CD8-positive, alpha-beta T cell (primary cell): ENCODE measurements at regions of chr19 and their contacts with region 1.

Region 1: GRCh38 chr19:18588611-18589379 is at the start of gene REX1BD:
- DNase-seq: peak; percentile 71 to 94 (median 89)
- ATAC-seq: peak; percentile 81
- H3K4me3 ChIP-seq: peak within 1 kb of the TSS; percentile 62 to 83
- H3K4me3 Mint-ChIP-seq: peak within 1 kb of the TSS; percentile 93
- H3K27ac ChIP-seq: peak within 1 kb of the TSS; percentile 83 to 86
- H3K27ac Mint-ChIP-seq: peak within 1 kb of the TSS; percentile 95
- H3K4me1 ChIP-seq: peaks cover 31% of the 10 kb centered on the region
- H3K4me1 Mint-ChIP-seq: peaks cover 34% of the 10 kb centered on the region
- H3K27me3 ChIP-seq: no peaks in the 10 kb centered on the region
- H3K27me3 Mint-ChIP-seq: no peaks in the 10 kb centered on the region
- CTCF ChIP-seq: peak; percentile 77
- total RNA-seq, gene REX1BD: 85.6 to 91.1 TPM

Region 2: GRCh38 chr19:18192673-18193387 is 396.0 kb before region 1 on chr19 and contains the start of gene MPV17L2:
- CTCF ChIA-PET with region 1: no interaction called
- POLR2A ChIA-PET with region 1: no interaction called
- intact Hi-C with region 1: loop called in 1 of 2 experiments (anchors 2 kb)
- DNase-seq: peak; percentile 95 to 100 (median 97)
- ATAC-seq: peak; percentile 84
- H3K4me3 ChIP-seq: peak within 1 kb of the TSS; percentile 73
- H3K4me3 Mint-ChIP-seq: peak within 1 kb of the TSS; percentile 87
- H3K27ac ChIP-seq: peak within 1 kb of the TSS; percentile 64 to 82
- H3K27ac Mint-ChIP-seq: peak within 1 kb of the TSS; percentile 90
- H3K4me1 ChIP-seq: peaks cover 18% of the 10 kb centered on the region
- H3K4me1 Mint-ChIP-seq: peaks cover 22% of the 10 kb centered on the region
- H3K27me3 ChIP-seq: no peaks in the 10 kb centered on the region
- H3K27me3 Mint-ChIP-seq: no peaks in the 10 kb centered on the region
- CTCF ChIP-seq: no peak
- total RNA-seq, gene MPV17L2: 4.0 to 5.2 TPM

Region 3: DNA sequence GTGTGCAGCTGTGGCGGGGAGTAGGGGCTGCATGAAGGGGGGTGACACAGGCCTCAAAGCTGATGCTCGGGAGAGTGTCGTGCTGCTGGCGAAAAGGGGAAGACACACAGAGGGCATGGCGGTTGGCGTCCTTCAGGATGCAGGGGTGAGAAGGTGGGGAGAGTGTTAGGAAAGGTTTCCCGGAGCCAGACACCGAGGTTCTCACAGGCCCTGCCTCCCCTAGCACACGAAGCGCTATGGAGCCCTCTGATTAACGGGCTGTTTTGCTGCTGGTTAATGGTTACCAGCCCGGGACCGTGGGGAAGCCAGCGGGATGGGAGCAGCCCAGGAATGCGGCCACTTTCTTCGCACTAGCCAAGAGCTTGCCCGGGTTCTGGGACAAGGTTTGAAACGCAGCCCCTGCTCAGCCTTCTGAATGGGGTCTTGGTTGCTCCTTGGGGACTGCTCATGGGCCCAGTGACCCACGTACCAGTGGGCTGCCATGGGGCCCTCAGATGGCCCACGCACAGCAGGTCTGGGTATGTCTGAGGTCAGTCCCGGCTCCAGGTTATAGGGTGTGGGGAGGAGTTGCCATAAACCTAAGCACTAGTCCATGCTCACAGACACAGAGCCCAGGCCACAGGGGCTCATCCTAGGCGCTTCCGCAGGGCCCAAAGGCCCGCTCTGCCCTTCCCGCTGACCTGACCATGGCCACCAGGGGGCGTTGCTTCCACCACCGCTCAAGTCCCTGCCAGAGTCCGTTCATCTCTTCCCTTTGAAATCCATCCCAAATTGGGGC is 119.5 kb before region 1 on chr19:
- CTCF ChIA-PET with region 1: interaction called, 6 read pairs
- POLR2A ChIA-PET with region 1: interaction called, 4 read pairs
- intact Hi-C with region 1: loop called in 1 of 2 experiments (anchors 5 kb)
- DNase-seq: peak; percentile 24 to 77 (median 62)
- ATAC-seq: peak; percentile 55
- H3K4me3 ChIP-seq: no peak overlapping the region
- H3K4me3 Mint-ChIP-seq: no peak overlapping the region
- H3K27ac ChIP-seq: no peak overlapping the region
- H3K27ac Mint-ChIP-seq: no peak overlapping the region
- H3K4me1 ChIP-seq: peaks cover 13% of the 10 kb centered on the region
- H3K4me1 Mint-ChIP-seq: peaks cover 21% of the 10 kb centered on the region
- H3K27me3 ChIP-seq: no peaks in the 10 kb centered on the region
- H3K27me3 Mint-ChIP-seq: no peaks in the 10 kb centered on the region
- CTCF ChIP-seq: peak; percentile 56

Region 4: DNA sequence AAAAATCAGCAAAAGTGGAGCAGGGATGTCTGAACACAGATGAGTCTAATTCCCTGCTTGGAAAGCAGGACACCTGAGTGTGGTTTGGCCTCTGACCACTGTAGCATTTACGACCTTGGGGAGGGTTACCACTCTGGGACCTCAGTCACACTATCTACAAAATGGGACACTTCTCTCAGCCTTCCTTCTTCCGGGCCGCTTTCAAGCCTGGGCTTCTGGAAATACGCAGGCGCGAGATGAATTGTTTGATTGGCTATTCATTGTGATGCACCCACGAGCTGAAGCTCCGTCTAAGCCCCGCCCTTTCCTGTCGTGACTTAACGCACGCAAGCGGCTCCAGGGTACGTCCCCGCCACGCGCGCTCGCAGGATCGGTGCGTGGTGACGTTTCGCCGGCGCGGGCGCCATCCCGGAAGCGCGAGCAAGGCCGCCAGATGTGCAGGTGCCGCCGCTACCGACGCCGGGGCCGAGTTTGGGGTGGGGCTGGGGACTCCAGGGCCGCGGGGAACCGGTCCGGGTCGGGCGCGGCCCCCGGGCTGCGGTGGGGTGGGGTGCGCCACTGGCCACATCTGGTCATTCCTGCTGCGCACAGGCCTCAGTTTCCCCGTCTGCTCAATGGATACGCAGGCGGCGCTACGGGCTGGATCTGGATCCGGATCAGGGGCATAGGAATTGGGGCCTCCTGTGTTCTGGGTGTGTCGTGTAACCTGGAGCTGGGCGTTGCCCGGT is 31.2 kb before region 1 on chr19 and contains the start of gene KXD1:
- CTCF ChIA-PET with region 1: no interaction called
- POLR2A ChIA-PET with region 1: interaction called, 15 read pairs
- intact Hi-C with region 1: loop called (anchors 1 kb)
- DNase-seq: peak; percentile 92 to 100 (median 97)
- ATAC-seq: peak; percentile 99
- H3K4me3 ChIP-seq: peak within 1 kb of the TSS; percentile 98 to 99
- H3K4me3 Mint-ChIP-seq: peak within 1 kb of the TSS; percentile 91
- H3K27ac ChIP-seq: peak within 1 kb of the TSS; percentile 96 to 99
- H3K27ac Mint-ChIP-seq: peak within 1 kb of the TSS; percentile 90
- H3K4me1 ChIP-seq: peaks cover 20% of the 10 kb centered on the region
- H3K4me1 Mint-ChIP-seq: peaks cover 20% of the 10 kb centered on the region
- H3K27me3 ChIP-seq: no peaks in the 10 kb centered on the region
- H3K27me3 Mint-ChIP-seq: no peaks in the 10 kb centered on the region
- CTCF ChIP-seq: no peak
- total RNA-seq, gene KXD1: 64.1 to 76.1 TPM

Region 5: DNA sequence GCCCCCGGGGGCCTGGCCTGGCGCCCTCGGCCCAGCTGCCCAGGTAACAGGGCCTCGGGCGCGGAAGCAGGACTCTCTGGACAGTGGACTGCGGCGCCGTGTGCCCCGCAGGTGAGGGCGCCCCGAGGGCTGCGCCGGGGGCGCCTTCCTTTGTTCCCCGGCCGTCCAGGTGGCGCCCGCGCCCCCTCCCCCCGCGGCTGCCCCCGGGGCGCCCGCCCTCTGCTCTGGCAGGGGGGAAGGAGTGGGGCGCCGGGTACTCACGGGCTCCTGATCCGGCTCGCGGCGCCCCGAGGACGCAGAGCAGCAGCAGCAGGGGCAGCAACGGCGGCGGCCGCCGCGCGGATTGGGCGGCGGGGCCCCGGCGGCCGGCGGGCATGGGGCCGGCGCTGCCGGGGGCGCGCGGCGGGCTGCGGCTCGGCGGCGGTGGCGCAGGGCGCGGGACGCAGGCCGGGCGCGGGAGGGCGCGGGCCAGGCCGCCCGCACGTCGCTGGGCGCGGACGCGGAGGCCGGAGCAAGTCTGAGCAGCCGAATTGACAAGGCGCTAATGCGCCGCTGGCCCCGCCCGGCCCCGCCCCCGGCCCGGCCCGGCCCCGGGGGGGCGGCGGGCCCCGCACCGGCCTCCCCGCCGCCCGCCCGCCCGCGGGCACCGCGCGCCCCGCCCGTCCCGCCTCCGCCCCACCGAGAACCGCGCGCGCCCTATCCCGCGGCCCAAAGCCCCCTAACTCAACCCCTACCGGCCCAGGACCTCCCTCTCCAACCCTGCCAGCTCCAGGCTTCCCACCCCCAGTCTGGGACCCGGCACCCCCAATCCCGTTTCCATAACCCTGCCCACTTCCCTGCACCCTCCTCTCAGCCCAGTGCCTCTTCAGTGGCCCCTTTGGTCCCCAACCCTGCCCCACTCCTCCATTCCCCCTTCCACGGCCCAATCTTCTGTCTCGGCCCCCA is 17.8 kb after region 1 on chr19 and contains the start of gene CRLF1:
- CTCF ChIA-PET with region 1: no interaction called
- POLR2A ChIA-PET with region 1: no interaction called
- intact Hi-C with region 1: no loop called
- DNase-seq: no peak
- ATAC-seq: no peak
- H3K4me3 ChIP-seq: no peak within 1 kb of the TSS
- H3K4me3 Mint-ChIP-seq: peak within 1 kb of the TSS; percentile 15
- H3K27ac ChIP-seq: no peak within 1 kb of the TSS
- H3K27ac Mint-ChIP-seq: no peak within 1 kb of the TSS
- H3K4me1 ChIP-seq: peaks cover 7% of the 10 kb centered on the region
- H3K4me1 Mint-ChIP-seq: peaks cover 20% of the 10 kb centered on the region
- H3K27me3 ChIP-seq: peaks cover 50 to 61% of the 10 kb centered on the region in 2 experiments
- H3K27me3 Mint-ChIP-seq: peaks cover 66% of the 10 kb centered on the region
- CTCF ChIP-seq: no peak
- total RNA-seq, gene CRLF1: not detected

Region 6: GRCh38 chr19:18683213-18683939 is 94.6 kb after region 1 on chr19 and contains the start of gene CRTC1:
- CTCF ChIA-PET with region 1: interaction called, 3 read pairs
- POLR2A ChIA-PET with region 1: no interaction called
- intact Hi-C with region 1: loop called in 1 of 2 experiments (anchors 2 kb)
- DNase-seq: peak; percentile 90 to 97 (median 95)
- ATAC-seq: peak; percentile 90
- H3K4me3 ChIP-seq: peak within 1 kb of the TSS; percentile 63 to 91
- H3K4me3 Mint-ChIP-seq: peak within 1 kb of the TSS; percentile 87
- H3K27ac ChIP-seq: peak within 1 kb of the TSS; percentile 65 to 67
- H3K27ac Mint-ChIP-seq: peak within 1 kb of the TSS; percentile 82
- H3K4me1 ChIP-seq: peaks cover 20% of the 10 kb centered on the region
- H3K4me1 Mint-ChIP-seq: peaks cover 33% of the 10 kb centered on the region
- H3K27me3 ChIP-seq: no peaks in the 10 kb centered on the region
- H3K27me3 Mint-ChIP-seq: no peaks in the 10 kb centered on the region
- CTCF ChIP-seq: no peak
- total RNA-seq, gene CRTC1: 7.1 to 7.5 TPM

Region 7: DNA sequence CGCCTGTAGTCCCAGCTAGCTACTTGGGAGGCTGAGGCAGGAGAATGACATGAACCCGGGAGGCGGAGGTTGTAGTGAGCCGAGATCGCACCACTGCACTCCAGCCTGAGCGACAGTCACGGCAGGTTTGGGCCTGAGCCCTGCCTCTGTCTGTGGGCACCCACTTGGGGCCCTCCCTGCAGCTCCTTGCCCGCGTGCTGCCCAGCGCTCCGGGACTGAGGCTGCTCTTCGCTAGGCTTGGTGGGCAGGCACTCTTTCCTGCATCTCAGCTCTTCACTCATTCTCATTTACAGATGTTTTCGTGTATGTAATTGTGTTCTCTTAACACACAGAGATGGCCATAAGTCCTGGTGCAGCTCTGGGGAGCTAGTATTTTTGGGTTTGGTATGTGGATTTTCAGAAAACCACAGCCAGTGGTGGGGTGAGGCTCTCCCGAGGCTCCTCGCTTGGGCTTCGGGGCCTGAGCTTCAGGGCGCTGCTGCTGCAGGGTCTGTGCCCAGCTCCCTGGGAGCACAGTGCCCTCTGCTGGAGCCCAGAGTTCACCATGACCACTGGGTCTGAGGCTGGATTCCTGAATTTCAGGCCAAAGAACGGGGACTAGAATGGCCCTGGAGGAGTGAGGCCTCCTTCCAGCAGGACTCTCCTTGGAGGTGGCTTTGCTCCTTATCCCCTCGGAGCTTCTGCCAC is 258.2 kb after region 1 on chr19:
- CTCF ChIA-PET with region 1: interaction called, 126 read pairs
- POLR2A ChIA-PET with region 1: interaction called, 7 read pairs
- intact Hi-C with region 1: no loop called
- DNase-seq: peak; percentile 37 to 81 (median 73)
- ATAC-seq: peak; percentile 65
- H3K4me3 ChIP-seq: no peak overlapping the region
- H3K4me3 Mint-ChIP-seq: peak overlapping the region; percentile 36
- H3K27ac ChIP-seq: no peak overlapping the region
- H3K27ac Mint-ChIP-seq: no peak overlapping the region
- H3K4me1 ChIP-seq: peaks cover 40% of the 10 kb centered on the region
- H3K4me1 Mint-ChIP-seq: peaks cover 56% of the 10 kb centered on the region
- H3K27me3 ChIP-seq: no peaks in the 10 kb centered on the region
- H3K27me3 Mint-ChIP-seq: no peaks in the 10 kb centered on the region
- CTCF ChIP-seq: peak; percentile 78